AG04450 (cell line): ENCODE measurements at regions of chr7 and their contacts with region 1.

Region 1: DNA sequence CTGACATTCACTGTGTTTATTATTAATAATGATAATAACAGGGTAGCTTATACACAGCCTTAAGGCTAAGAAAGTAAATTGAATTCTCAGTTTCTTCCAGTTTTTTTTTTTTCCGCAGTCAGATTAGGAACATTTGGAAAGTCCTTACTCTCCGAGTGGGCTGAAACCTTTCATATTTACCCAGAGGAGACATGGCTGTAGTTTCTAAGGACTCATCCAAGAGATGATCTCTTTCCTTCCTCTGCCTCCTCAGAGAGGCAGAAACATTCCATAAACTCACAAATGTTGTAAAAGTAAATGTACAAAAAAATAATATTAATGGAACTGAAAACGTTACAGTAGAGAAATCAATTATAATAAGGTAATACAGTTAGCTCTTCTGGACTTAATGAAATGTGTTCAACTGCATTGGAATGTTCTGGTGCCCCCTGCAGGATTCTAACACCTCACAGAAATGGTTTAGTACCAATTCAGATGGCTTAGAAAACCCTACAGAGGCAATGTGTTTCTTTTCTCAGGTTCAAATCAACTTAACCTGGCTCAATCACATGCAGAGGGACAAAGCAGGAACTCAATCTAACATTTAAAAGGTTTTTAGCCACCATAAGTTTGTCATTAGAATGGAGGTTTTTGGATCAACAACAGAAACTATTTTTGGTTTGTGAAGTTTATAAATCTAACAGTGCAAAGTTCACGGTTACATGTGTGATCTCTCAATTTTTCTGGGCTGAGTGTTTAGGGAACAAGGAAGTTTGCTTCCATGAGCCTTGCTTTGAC is 71.7 kb downstream of the ICA1 start:
- DNase-seq: peak; percentile 6
- H3K4me3 ChIP-seq: no peak overlapping the region
- H3K27ac ChIP-seq: no peak overlapping the region
- H3K27me3 ChIP-seq: no peaks in the 10 kb centered on the region
- CTCF ChIP-seq: peak; percentile 64

Region 2: GRCh38 chr7:7595451-7595850 is 594.9 kb before region 1 on chr7:
- CTCF ChIA-PET with region 1: interaction called, 29 read pairs
- POLR2A ChIA-PET with region 1: no interaction called
- DNase-seq: no peak
- H3K4me3 ChIP-seq: no peak overlapping the region
- H3K27ac ChIP-seq: no peak overlapping the region
- H3K27me3 ChIP-seq: no peaks in the 10 kb centered on the region
- CTCF ChIP-seq: peak; percentile 43

Region 3: DNA sequence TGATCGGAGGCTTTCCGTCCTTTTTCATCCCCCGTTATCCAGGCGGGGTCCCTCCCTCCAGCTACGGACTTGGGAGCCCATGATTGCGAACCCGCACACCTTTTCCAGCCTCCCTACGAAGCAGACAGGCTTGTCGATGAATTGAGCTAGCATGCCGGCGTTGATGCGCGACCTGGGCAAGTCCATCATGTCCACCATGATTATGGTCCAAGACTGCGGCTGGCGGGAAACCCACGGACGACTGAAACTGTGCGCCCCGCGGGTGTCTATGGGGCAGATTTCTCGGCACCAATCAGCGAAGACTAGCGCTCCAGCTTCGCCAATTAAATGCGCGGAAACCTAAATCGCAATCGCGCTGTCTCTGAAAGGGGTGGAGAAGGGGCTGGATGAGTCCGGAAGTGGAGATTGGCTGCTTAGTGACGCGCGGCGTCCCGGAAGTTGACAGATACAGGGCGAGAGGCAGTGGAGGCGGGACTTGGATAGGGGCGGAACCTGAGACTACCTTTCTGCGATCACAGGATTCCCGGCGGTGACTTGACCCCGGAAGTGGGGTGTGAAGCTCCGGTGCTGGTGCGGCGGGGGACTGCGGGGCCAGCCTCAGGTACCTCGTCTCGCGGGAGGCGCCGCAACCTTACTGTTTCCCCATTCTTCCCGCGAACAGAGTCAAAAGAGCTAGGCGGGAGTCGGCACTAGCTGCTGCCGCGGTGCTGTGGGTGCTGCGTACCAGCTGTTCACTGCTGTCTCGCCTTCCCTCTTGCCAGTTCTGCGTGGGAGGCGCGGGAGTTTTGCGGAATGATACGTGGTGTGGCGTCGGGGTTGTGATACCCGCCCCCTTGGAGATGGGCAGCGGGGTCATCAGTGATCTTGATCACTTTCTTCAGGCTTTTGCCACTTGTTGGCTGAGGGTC is 549.8 kb before region 1 on chr7 and contains the start of gene UMAD1:
- CTCF ChIA-PET with region 1: interaction called, 10 read pairs
- POLR2A ChIA-PET with region 1: no interaction called
- DNase-seq: peak; percentile 95
- H3K4me3 ChIP-seq: peak within 1 kb of the TSS; percentile 100
- H3K27ac ChIP-seq: peak within 1 kb of the TSS; percentile 78
- H3K27me3 ChIP-seq: no peaks in the 10 kb centered on the region
- CTCF ChIP-seq: no peak
- polyA plus RNA-seq, gene UMAD1: 16.5 and 22.8 TPM in 2 replicates

Region 4: GRCh38 chr7:8201846-8202441 is 11.6 kb after region 1 on chr7:
- CTCF ChIA-PET with region 1: interaction called, 10 read pairs
- POLR2A ChIA-PET with region 1: no interaction called
- DNase-seq: no peak
- H3K4me3 ChIP-seq: no peak overlapping the region
- H3K27ac ChIP-seq: no peak overlapping the region
- H3K27me3 ChIP-seq: peaks cover 2% of the 10 kb centered on the region
- CTCF ChIP-seq: no peak